ENCODE measurements at regions of chr10 and their contacts with region 1.

Region 1: DNA sequence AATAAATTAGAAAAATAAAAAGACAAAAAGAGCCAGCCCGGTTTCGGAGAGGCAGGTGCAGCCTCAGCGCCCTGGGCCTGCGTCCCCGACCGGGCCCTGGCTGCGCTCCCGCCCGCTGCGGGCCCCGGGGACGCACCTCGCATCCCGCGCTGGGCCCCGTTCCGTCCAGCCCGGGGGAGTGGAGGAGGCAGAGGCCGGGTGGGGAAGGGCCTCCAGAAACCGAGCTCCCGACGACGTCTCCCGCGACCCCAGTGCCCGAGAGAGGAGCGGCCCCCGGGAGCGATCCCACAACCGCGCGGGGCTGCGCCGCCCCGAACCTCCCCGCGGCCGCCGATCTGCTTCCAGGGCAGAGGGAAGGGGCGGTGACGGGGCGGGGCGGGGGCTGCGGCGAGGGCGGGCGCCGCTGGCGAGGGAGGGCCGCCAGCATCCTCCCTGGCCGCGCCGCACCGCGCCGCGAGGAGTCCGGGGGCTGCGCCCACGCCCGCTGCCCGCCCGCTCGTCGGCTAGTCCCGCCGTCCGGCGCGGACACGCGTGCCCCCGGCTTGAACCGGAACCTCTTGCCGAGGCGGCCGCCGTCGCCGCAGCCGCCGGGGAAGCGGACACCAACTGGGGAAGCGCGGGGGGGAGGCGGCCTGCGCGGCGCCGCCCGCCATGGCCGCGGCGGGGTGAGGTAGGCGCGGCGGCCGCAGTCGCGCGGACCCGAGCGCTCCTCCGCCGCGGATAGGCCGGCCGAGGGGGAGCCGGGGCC is at the start of gene CCNY:
- DNase-seq: peak; percentile 34 to 93 (median 82)

Region 2: GRCh38 chr10:35289198-35289597 is 47.1 kb before region 1 on chr10:
- intact Hi-C with region 1: no loop called
- DNase-seq: no peak

Region 3: DNA sequence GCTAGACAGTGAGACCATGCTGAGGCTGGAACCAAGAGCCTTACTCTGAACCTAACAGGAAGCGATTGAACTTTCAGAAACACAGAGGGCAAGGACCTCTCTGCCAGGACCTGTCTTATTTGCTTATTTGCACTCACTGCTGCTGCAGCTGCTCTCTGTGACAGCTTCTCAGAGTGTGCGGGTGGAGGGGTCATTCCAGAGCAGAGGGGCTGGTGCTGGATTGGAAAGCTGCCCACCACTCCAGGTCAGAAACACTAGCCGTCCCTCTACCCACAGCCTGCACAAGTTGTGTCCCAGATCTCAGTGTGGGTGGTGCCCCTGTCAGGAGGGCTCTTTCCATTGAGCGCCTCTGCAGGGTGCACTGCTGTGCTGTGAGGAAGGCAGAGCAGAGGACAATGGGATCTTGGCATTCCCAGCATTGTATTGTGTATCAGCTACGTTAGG is 126.3 kb after region 1 on chr10:
- intact Hi-C with region 1: loop called (anchors 10 kb)
- DNase-seq: peak in 24 of 42 donors; percentile 26 to 80 (median 59)

Region 4: DNA sequence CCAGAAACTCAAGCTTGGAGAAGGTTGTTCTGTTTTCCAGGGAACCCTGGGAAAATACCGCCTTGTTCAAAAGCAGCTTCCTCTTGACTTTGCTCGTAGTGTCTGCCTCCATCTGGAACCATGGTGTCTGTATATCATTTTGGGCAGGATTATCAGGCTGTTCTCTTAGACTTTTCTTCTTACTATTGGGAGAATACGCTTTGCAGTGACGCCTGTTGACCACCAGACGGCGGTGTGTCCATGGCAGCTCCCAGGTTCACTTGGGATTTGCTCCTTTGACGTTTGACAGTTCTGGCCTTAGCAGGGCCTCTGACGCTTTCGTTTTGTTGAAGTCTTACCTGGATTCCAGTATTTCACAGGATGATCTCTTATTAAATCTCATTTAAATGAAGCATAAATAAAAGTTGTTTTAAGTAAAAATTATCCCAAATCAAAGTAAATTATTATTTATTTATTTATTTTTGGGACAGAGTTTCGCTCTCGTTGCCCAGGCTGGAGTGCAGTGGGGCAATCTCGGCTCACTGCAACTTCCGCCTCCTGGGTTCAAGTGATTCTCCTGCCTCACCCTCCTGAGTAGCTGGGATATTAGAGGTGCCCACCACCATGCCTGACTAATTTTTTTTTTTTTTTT is 227.1 kb after region 1 on chr10:
- intact Hi-C with region 1: loop called (anchors 10 kb)
- DNase-seq: peak in 40 of 42 donors; percentile 27 to 84 (median 62)

Measured in head of caudate nucleus (tissue), 42 donors.